Sciatic nerve (tissue), 2 donors: ENCODE measurements at regions of chr16 and their contacts with region 1.

Region 1: DNA sequence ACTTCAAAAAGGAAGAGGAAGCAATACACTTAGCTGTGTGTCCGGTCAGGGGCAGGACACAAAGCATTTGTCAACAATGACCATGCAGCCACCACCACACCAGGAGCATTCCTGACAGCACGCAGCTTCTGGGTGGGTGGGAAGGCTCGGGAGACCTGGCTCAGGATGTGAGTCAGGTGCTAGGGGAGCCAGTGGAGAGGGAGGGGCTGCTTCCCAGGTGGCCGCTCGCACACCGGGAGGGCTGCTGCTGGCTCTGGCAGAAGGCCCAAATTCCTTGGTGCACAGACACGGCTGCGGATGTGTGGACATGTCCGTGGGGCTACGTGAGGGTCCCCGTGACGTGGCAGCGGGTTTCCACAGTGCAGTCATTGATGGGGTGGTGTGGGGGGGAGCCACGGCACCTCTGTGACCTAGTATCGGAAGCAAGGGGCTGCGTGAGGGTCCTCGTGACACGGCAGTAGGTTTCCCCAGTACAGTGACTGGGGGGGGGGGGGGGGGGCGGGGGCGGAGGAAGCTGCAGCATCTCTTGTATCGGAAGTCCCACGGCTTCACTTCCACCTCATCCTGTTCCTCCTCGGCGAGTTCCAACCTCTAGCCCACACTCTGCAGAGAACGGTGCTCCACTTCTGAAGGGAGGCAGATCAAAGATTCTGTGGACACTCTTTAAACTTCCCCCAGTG is 112.8 kb downstream of the ZNF778 start:
- DNase-seq: no peak
- ATAC-seq: no peak

Region 2: GRCh38 chr16:89490387-89491237 is 160.3 kb after region 1 on chr16 and contains the start of gene ANKRD11:
- intact Hi-C with region 1: loop called (anchors 10 kb)
- DNase-seq: peak; percentile 99
- ATAC-seq: peak; percentile 99
- total RNA-seq, gene ANKRD11: 140 TPM

Region 3: GRCh38 chr16:89556750-89557689 is 226.7 kb after region 1 on chr16:
- intact Hi-C with region 1: loop called (anchors 5 kb)
- DNase-seq: peak; percentile 92
- ATAC-seq: peak; percentile 46